Activated CD4-positive, alpha-beta T cell treated with anti-CD3 and anti-CD28 coated beads for 36 hours (primary cell): ENCODE measurements at regions of chr4 and their contacts with region 1.

Region 1: DNA sequence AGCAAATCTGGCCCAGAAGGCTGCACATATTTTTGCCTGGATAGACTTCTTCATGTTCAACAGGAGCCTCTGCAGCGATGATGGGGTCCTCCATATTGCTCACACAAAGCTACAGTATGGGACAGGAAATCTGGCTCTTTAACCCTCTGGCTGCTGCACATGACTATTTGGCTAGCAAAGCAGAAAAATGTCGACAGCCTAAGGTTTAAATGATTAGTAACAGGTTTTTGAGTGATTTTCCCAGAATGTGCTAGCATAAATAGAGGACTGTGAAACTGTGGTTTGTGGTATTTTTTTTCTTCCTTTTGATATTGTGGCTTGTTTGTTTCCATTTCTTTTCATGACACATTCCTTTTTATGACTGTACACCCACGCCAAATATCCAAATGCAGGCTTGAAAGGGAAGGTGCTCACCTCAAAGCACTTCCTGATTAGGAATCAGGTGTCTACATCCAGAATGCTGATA is 120.2 kb upstream of the GK2 start:
- DNase-seq: peak; percentile 26
- ATAC-seq: peak; percentile 72
- H3K4me3 Mint-ChIP-seq: no peak overlapping the region
- H3K27ac Mint-ChIP-seq: no peak overlapping the region
- H3K4me1 Mint-ChIP-seq: peaks cover 14% of the 10 kb centered on the region
- H3K27me3 Mint-ChIP-seq: peaks cover 13% of the 10 kb centered on the region

Region 2: DNA sequence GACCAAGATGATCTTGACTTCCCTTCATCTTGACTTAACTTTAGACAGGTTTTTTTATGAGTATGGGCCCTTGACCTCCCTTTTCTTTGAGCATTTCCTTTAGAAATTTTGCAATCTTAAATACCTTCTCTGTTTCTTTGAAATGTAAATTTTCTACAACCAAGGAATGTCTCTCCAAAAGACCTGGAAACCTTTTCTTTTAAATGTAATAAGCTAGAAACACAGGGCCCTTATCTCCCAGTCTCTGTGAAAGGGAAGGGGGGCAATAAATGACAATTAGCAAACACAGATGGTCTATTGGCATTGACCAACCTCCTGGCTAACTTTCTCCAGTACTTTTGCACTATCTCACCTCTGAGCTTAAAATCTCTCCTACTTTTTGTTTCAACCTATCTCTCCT is 24.0 kb after region 1 on chr4:
- CTCF ChIA-PET with region 1: no interaction called
- POLR2A ChIA-PET with region 1: no interaction called
- intact Hi-C with region 1: no loop called
- DNase-seq: no peak
- ATAC-seq: no peak
- H3K4me3 Mint-ChIP-seq: no peak overlapping the region
- H3K27ac Mint-ChIP-seq: no peak overlapping the region
- H3K4me1 Mint-ChIP-seq: no peaks in the 10 kb centered on the region
- H3K27me3 Mint-ChIP-seq: no peaks in the 10 kb centered on the region

Region 3: DNA sequence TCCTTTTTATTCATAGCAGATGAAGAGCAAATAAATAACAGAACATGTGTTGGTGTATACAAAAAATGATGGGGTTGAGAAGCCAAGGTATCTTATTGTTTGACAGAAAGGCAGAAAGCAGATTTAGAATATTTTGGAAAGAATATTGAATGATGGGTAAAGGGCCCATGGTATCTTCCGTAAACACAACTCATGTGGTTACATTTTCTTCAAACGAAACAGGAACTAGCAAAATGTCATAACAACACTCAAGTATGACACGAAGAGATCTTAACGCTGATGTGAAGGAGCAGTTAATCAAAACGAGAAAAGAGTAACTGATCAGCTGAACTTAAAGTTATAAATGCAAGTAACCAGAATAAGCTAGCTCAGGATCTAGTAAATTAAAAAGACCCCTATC is 75.4 kb after region 1 on chr4:
- CTCF ChIA-PET with region 1: no interaction called
- POLR2A ChIA-PET with region 1: no interaction called
- intact Hi-C with region 1: loop called in 1 of 2 experiments (anchors 5 kb)
- DNase-seq: no peak
- ATAC-seq: peak; percentile 83
- H3K4me3 Mint-ChIP-seq: no peak overlapping the region
- H3K27ac Mint-ChIP-seq: no peak overlapping the region
- H3K4me1 Mint-ChIP-seq: peaks cover 9% of the 10 kb centered on the region
- H3K27me3 Mint-ChIP-seq: no peaks in the 10 kb centered on the region